Mammary epithelial cell (primary cell): ENCODE measurements at regions of chr1 and their contacts with region 1.

Region 1: GRCh38 chr1:200558866-200559459 is 61.6 kb downstream of the KIF14 start:
- DNase-seq: peak; percentile 35
- H3K4me3 ChIP-seq: no peak overlapping the region
- H3K27ac ChIP-seq: no peak overlapping the region
- H3K4me1 ChIP-seq: no peaks in the 10 kb centered on the region
- H3K27me3 ChIP-seq: no peaks in the 10 kb centered on the region
- CTCF ChIP-seq: peak; percentile 60 to 73

Region 2: GRCh38 chr1:200172311-200172710 is 386.7 kb before region 1 on chr1:
- CTCF ChIA-PET with region 1: no interaction called
- dilution Hi-C with region 1: no loop called
- in situ Hi-C with region 1: no loop called
- intact Hi-C with region 1: no loop called
- DNase-seq: no peak
- H3K4me3 ChIP-seq: no peak overlapping the region
- H3K27ac ChIP-seq: no peak overlapping the region
- H3K4me1 ChIP-seq: peaks cover 3% of the 10 kb centered on the region
- H3K27me3 ChIP-seq: peaks cover 12% of the 10 kb centered on the region
- CTCF ChIP-seq: no peak

Region 3: GRCh38 chr1:200473698-200474371 is 85.1 kb before region 1 on chr1:
- CTCF ChIA-PET with region 1: no interaction called
- dilution Hi-C with region 1: no loop called
- in situ Hi-C with region 1: no loop called
- intact Hi-C with region 1: no loop called
- DNase-seq: no peak
- H3K4me3 ChIP-seq: no peak overlapping the region
- H3K27ac ChIP-seq: no peak overlapping the region
- H3K4me1 ChIP-seq: peaks cover 2% of the 10 kb centered on the region
- H3K27me3 ChIP-seq: no peaks in the 10 kb centered on the region
- CTCF ChIP-seq: no peak

Region 4: DNA sequence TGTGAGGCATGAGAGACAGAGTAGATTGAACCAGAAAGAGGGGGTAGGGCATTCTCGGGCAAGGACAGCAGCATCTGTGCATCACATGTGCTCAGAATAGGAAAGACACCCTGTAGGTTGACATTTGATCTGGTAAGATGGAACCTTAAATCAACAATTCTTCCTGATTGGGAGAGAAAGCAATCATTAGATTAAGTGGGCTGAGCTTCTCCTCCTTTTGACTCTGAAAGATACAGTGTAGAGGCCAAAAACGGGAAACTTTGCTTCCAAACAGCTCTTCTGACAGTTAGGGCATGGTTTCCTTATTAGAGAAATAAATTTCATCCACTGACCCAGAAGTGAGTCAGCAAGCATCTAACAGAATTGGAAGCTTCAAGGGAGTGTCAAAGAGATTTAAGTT is 51.9 kb after region 1 on chr1:
- CTCF ChIA-PET with region 1: interaction called, 6 read pairs
- dilution Hi-C with region 1: loop called (anchors 10 kb)
- in situ Hi-C with region 1: no loop called
- intact Hi-C with region 1: no loop called
- DNase-seq: no peak
- H3K4me3 ChIP-seq: no peak overlapping the region
- H3K27ac ChIP-seq: no peak overlapping the region
- H3K4me1 ChIP-seq: no peaks in the 10 kb centered on the region
- H3K27me3 ChIP-seq: no peaks in the 10 kb centered on the region
- CTCF ChIP-seq: no peak

Region 5: GRCh38 chr1:200673952-200674823 is 115.2 kb after region 1 on chr1:
- CTCF ChIA-PET with region 1: no interaction called
- dilution Hi-C with region 1: no loop called
- in situ Hi-C with region 1: no loop called
- intact Hi-C with region 1: no loop called
- DNase-seq: peak; percentile 88
- H3K4me3 ChIP-seq: peak overlapping the region in 1 of 3 experiments; percentile 2
- H3K27ac ChIP-seq: peak overlapping the region; percentile 95
- H3K4me1 ChIP-seq: peaks cover 39% of the 10 kb centered on the region
- H3K27me3 ChIP-seq: no peaks in the 10 kb centered on the region
- CTCF ChIP-seq: no peak

Region 6: GRCh38 chr1:200834383-200834782 is 275.4 kb after region 1 on chr1:
- CTCF ChIA-PET with region 1: no interaction called
- dilution Hi-C with region 1: no loop called
- in situ Hi-C with region 1: no loop called
- intact Hi-C with region 1: no loop called
- DNase-seq: no peak
- H3K4me3 ChIP-seq: no peak overlapping the region
- H3K27ac ChIP-seq: no peak overlapping the region
- H3K4me1 ChIP-seq: peaks cover 9% of the 10 kb centered on the region
- H3K27me3 ChIP-seq: no peaks in the 10 kb centered on the region
- CTCF ChIP-seq: no peak

Region 7: GRCh38 chr1:200979574-200980451 is 420.9 kb after region 1 on chr1:
- CTCF ChIA-PET with region 1: no interaction called
- dilution Hi-C with region 1: no loop called
- in situ Hi-C with region 1: no loop called
- intact Hi-C with region 1: loop called (anchors 2 kb)
- DNase-seq: peak; percentile 8
- H3K4me3 ChIP-seq: no peak overlapping the region
- H3K27ac ChIP-seq: no peak overlapping the region
- H3K4me1 ChIP-seq: no peaks in the 10 kb centered on the region
- H3K27me3 ChIP-seq: no peaks in the 10 kb centered on the region
- CTCF ChIP-seq: peak; percentile 56 to 64